ENCODE measurements at regions of chr3 and their contacts with region 1.

Region 1: GRCh38 chr3:32570421-32571191 is at the start of gene DYNC1LI1:
- DNase-seq: peak; percentile 85 to 97 (median 92)
- ATAC-seq: peak; percentile 95
- H3K4me3 ChIP-seq: peak within 1 kb of the TSS; percentile 76
- H3K4me3 Mint-ChIP-seq: peak within 1 kb of the TSS; percentile 94
- H3K27ac ChIP-seq: peak within 1 kb of the TSS; percentile 72
- H3K27ac Mint-ChIP-seq: peak within 1 kb of the TSS; percentile 74
- H3K4me1 ChIP-seq: peaks cover 20% of the 10 kb centered on the region
- H3K4me1 Mint-ChIP-seq: peaks cover 40% of the 10 kb centered on the region
- H3K27me3 ChIP-seq: no peaks in the 10 kb centered on the region
- H3K27me3 Mint-ChIP-seq: no peaks in the 10 kb centered on the region
- CTCF ChIP-seq: no peak
- total RNA-seq, gene DYNC1LI1: 28.1 to 28.3 TPM

Region 2: DNA sequence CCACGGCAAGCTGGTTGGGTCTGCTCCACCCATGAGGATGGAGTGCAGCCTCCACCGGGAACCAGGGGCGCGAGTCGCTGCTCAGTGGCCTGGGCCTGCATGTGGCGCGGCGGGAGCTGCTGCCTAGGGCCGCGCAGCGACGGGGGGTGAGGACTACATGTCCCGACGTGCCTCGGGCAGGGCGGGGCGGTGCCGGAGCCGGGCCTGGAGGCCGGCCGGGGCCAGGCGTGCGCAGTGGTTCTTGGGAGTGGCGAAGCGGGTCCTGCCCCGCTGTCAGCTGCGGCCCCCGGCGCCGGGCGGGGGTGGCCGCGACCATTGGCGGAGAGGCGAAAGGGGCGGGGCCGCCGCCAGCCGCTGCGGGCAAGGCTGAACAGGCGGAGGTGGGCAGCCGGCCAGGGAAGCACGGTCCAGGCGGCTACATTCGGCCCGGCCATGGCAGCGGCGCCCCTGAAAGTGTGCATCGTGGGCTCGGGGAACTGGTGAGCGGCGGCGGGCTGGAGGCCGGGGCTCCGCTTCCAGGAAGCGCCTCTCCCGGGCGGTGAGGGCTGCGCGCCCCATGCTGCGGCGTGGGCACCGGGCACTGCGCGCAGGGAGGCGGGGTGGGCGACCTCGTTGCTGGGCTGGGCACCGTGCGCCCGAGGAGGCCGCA is 464.2 kb before region 1 on chr3 and contains the start of gene GPD1L:
- CTCF ChIA-PET with region 1: no interaction called
- POLR2A ChIA-PET with region 1: no interaction called
- intact Hi-C with region 1: loop called in 1 of 2 experiments (anchors 5 kb)
- DNase-seq: peak; percentile 76 to 96 (median 90)
- ATAC-seq: peak; percentile 97
- H3K4me3 ChIP-seq: peak within 1 kb of the TSS; percentile 80
- H3K4me3 Mint-ChIP-seq: peak within 1 kb of the TSS; percentile 97
- H3K27ac ChIP-seq: peak within 1 kb of the TSS; percentile 21 to 29
- H3K27ac Mint-ChIP-seq: peak within 1 kb of the TSS; percentile 66
- H3K4me1 ChIP-seq: peaks cover 39% of the 10 kb centered on the region
- H3K4me1 Mint-ChIP-seq: peaks cover 34% of the 10 kb centered on the region
- H3K27me3 ChIP-seq: no peaks in the 10 kb centered on the region
- H3K27me3 Mint-ChIP-seq: no peaks in the 10 kb centered on the region
- CTCF ChIP-seq: no peak
- total RNA-seq, gene GPD1L: 15.3 to 16.0 TPM

Region 3: DNA sequence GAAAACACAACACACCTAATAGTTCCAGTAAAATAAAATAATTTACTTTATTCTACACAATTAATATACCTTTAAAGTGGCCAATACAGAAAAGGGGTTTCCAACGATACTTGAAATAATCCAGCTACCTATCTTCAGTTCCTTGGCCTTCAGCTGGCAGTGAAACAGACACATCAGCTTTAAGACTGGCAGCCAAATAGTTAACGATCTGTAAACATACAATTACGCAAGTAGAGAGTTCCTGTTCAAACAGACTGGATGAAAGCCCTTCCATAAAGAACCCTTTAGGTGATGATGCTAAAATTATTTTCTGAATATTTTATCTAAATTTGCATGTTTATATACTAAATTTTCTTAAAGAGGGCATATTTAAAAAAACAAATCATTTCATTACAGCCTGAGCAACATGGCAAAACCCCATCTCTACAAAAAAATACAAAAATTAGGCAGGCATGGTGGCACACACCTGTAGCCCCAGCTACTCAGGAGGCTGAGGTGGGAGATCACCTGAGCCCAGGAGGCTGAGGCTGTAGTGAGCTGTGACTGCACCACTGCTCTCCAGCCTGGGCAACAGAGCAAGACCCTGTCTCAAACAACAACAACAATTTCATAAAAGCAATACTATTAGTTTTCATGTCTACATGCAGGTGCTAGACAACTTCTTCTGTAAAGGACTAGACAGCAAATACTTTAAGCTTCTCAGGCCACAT is 12.8 kb before region 1 on chr3:
- CTCF ChIA-PET with region 1: no interaction called
- POLR2A ChIA-PET with region 1: interaction called, 12 read pairs
- intact Hi-C with region 1: no loop called
- DNase-seq: no peak
- ATAC-seq: no peak
- H3K4me3 ChIP-seq: no peak overlapping the region
- H3K4me3 Mint-ChIP-seq: no peak overlapping the region
- H3K27ac ChIP-seq: no peak overlapping the region
- H3K27ac Mint-ChIP-seq: no peak overlapping the region
- H3K4me1 ChIP-seq: peaks cover 3% of the 10 kb centered on the region
- H3K4me1 Mint-ChIP-seq: peaks cover 33% of the 10 kb centered on the region
- H3K27me3 ChIP-seq: no peaks in the 10 kb centered on the region
- H3K27me3 Mint-ChIP-seq: no peaks in the 10 kb centered on the region
- CTCF ChIP-seq: no peak

Region 4: GRCh38 chr3:32684800-32685542 is 114.4 kb after region 1 on chr3 and contains the start of gene CNOT10:
- CTCF ChIA-PET with region 1: interaction called, 4 read pairs
- POLR2A ChIA-PET with region 1: interaction called, 4 read pairs
- intact Hi-C with region 1: loop called in 1 of 2 experiments (anchors 2 kb)
- DNase-seq: peak; percentile 91 to 98 (median 94)
- ATAC-seq: peak; percentile 87
- H3K4me3 ChIP-seq: peak within 1 kb of the TSS; percentile 92
- H3K4me3 Mint-ChIP-seq: peak within 1 kb of the TSS; percentile 87
- H3K27ac ChIP-seq: peak within 1 kb of the TSS; percentile 74 to 82
- H3K27ac Mint-ChIP-seq: peak within 1 kb of the TSS; percentile 97
- H3K4me1 ChIP-seq: peaks cover 15% of the 10 kb centered on the region
- H3K4me1 Mint-ChIP-seq: peaks cover 41% of the 10 kb centered on the region
- H3K27me3 ChIP-seq: no peaks in the 10 kb centered on the region
- H3K27me3 Mint-ChIP-seq: no peaks in the 10 kb centered on the region
- CTCF ChIP-seq: no peak
- total RNA-seq, gene CNOT10: 31.3 to 42.0 TPM

Region 5: GRCh38 chr3:33096093-33096868 is 525.7 kb after region 1 on chr3:
- CTCF ChIA-PET with region 1: no interaction called
- POLR2A ChIA-PET with region 1: no interaction called
- intact Hi-C with region 1: loop called in 1 of 2 experiments (anchors 10 kb)
- DNase-seq: peak; percentile 29 to 71 (median 36)
- ATAC-seq: peak; percentile 53
- H3K4me3 ChIP-seq: peak overlapping the region; percentile 79
- H3K4me3 Mint-ChIP-seq: peak overlapping the region; percentile 97
- H3K27ac ChIP-seq: peak overlapping the region; percentile 15 to 35
- H3K27ac Mint-ChIP-seq: peak overlapping the region; percentile 83
- H3K4me1 ChIP-seq: peaks cover 46% of the 10 kb centered on the region
- H3K4me1 Mint-ChIP-seq: peaks cover 48% of the 10 kb centered on the region
- H3K27me3 ChIP-seq: no peaks in the 10 kb centered on the region
- H3K27me3 Mint-ChIP-seq: no peaks in the 10 kb centered on the region
- CTCF ChIP-seq: no peak